ENCODE measurements at regions of chr14 and their contacts with region 1.

Region 1: GRCh38 chr14:91177073-91178034 is 63.5 kb downstream of the DGLUCY start:
- DNase-seq: peak; percentile 79
- ATAC-seq: peak; percentile 81
- H3K4me3 Mint-ChIP-seq: no peak overlapping the region
- H3K27ac Mint-ChIP-seq: peak overlapping the region; percentile 92
- H3K4me1 Mint-ChIP-seq: peaks cover 11% of the 10 kb centered on the region
- H3K27me3 Mint-ChIP-seq: no peaks in the 10 kb centered on the region

Region 2: DNA sequence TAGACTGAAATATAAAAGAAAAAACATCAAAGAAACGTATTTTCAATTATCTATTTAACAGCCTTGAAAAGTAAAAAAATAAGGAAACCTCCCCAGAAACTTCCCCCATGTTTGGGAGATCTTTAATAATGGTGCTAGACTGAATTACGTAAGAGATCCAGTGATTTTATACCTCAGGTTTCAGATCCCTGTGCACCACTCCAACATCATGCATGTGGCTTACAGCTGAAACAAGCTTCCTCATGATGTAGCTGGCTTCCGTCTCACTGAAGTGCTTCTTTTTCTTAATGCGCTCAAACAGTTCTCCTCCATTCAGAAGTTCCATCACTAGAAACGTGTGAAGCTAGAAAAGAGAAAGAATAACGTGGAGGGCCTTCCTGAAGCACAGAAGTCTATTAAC is 283.1 kb before region 1 on chr14:
- CTCF ChIA-PET with region 1: interaction called, 15 read pairs
- POLR2A ChIA-PET with region 1: no interaction called
- intact Hi-C with region 1: no loop called
- DNase-seq: no peak
- ATAC-seq: no peak
- H3K4me3 Mint-ChIP-seq: no peak overlapping the region
- H3K27ac Mint-ChIP-seq: no peak overlapping the region
- H3K4me1 Mint-ChIP-seq: no peaks in the 10 kb centered on the region
- H3K27me3 Mint-ChIP-seq: no peaks in the 10 kb centered on the region

Region 3: GRCh38 chr14:91048265-91048664 is 129.1 kb before region 1 on chr14:
- CTCF ChIA-PET with region 1: no interaction called
- POLR2A ChIA-PET with region 1: no interaction called
- intact Hi-C with region 1: no loop called
- DNase-seq: no peak
- ATAC-seq: no peak
- H3K4me3 Mint-ChIP-seq: no peak overlapping the region
- H3K27ac Mint-ChIP-seq: no peak overlapping the region
- H3K4me1 Mint-ChIP-seq: peaks cover 35% of the 10 kb centered on the region
- H3K27me3 Mint-ChIP-seq: no peaks in the 10 kb centered on the region

Region 4: DNA sequence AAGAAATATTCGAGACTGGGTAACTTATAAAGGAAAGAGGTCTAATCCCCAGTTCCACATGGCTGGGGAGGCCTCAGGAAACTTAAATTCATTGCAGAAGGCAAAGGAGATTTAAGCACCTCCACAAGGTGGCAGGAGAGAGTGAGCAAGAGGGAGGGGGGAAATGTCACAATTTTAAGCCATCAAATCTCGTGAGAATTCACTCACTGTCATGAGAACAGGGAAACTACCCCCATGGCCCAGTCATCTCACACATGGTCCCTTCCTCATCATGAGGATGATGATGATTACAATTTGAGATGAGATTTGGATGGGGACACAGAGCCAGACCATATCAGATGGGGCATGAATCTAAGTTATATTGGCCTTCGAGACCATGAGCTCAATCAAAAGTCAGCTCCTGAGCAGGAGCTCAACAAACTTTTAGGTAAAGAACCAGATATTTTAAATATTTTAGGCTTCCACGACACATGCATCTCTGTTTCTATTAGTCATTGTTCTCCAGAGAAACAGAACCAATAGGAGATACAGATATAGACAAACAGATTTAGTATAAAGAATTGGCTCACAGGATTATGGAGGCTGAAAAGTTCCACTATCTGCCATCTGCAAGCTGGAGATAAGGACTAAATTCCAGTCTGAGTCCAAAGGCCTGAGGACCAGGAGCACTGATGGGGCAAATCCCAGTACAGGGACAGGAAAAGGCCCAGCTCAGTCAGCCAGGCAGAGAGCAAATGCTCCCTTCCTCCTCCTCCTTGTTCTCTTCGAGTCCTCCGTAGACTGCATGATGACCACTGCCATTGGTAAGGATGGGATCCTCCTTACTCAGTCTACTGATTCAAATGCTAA is 38.6 kb before region 1 on chr14:
- CTCF ChIA-PET with region 1: interaction called, 17 read pairs
- POLR2A ChIA-PET with region 1: no interaction called
- intact Hi-C with region 1: no loop called
- DNase-seq: peak; percentile 72
- ATAC-seq: peak; percentile 84
- H3K4me3 Mint-ChIP-seq: no peak overlapping the region
- H3K27ac Mint-ChIP-seq: peak overlapping the region; percentile 29
- H3K4me1 Mint-ChIP-seq: peaks cover 41% of the 10 kb centered on the region
- H3K27me3 Mint-ChIP-seq: no peaks in the 10 kb centered on the region

Region 5: GRCh38 chr14:91193069-91193468 is 15.7 kb after region 1 on chr14:
- CTCF ChIA-PET with region 1: interaction called, 10 read pairs
- POLR2A ChIA-PET with region 1: interaction called, 8 read pairs
- intact Hi-C with region 1: no loop called
- DNase-seq: no peak
- ATAC-seq: no peak
- H3K4me3 Mint-ChIP-seq: no peak overlapping the region
- H3K27ac Mint-ChIP-seq: peak overlapping the region; percentile 49
- H3K4me1 Mint-ChIP-seq: peaks cover 22% of the 10 kb centered on the region
- H3K27me3 Mint-ChIP-seq: no peaks in the 10 kb centered on the region

Region 6: GRCh38 chr14:91228112-91229004 is 51.0 kb after region 1 on chr14:
- CTCF ChIA-PET with region 1: interaction called, 4 read pairs
- POLR2A ChIA-PET with region 1: no interaction called
- intact Hi-C with region 1: loop called (anchors 1 to 2 kb)
- DNase-seq: peak; percentile 95
- ATAC-seq: peak; percentile 87
- H3K4me3 Mint-ChIP-seq: peak overlapping the region; percentile 67
- H3K27ac Mint-ChIP-seq: peak overlapping the region; percentile 100
- H3K4me1 Mint-ChIP-seq: peaks cover 95% of the 10 kb centered on the region
- H3K27me3 Mint-ChIP-seq: no peaks in the 10 kb centered on the region

Region 7: DNA sequence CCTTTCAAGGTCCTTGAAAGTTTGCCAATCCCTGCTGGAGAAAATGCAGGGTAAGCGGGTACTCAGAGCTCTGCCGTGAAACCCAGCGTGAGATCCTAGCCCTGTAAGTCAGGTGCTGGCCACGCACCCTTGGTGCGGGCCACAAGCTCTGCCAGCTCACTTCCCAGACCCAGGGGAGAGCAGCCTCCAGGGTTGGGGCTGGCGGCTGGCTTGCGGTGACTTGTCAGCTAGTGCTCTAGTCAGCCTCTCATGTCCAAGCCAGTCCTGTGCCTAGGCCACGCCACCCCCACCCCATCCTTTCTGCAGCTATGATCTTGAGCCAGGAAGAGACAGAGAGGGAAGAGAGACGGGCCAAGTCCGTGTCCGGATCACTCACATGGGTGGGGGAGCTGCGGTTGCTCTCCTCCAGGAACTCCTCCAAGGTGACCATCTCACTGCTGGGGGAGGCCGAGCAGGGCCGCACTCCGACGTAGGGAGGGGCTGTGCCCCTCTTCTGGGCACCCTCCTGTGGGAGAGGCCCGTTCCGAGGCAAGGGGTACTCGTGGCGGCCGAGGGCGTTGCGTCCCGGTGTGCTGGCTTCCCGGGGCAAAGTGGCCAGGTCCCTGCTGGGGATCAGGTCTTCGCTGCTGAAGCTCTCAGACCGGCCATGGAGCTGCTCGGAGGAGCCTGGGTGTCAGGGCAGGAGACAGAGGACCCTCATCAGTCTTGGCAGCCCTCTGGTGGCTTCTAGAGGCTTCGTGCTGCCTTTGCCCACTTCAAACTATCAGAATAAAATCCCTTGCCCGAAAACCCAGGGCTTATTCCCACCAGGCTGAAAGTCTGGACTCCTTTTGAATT is 100.4 kb after region 1 on chr14:
- CTCF ChIA-PET with region 1: interaction called, 253 read pairs
- POLR2A ChIA-PET with region 1: no interaction called
- intact Hi-C with region 1: no loop called
- DNase-seq: no peak
- ATAC-seq: no peak
- H3K4me3 Mint-ChIP-seq: no peak overlapping the region
- H3K27ac Mint-ChIP-seq: no peak overlapping the region
- H3K4me1 Mint-ChIP-seq: no peaks in the 10 kb centered on the region
- H3K27me3 Mint-ChIP-seq: no peaks in the 10 kb centered on the region

Region 8: GRCh38 chr14:92074555-92074954 is 897.2 kb after region 1 on chr14:
- CTCF ChIA-PET with region 1: no interaction called
- POLR2A ChIA-PET with region 1: no interaction called
- intact Hi-C with region 1: no loop called
- DNase-seq: no peak
- ATAC-seq: no peak
- H3K4me3 Mint-ChIP-seq: no peak overlapping the region
- H3K27ac Mint-ChIP-seq: peak overlapping the region; percentile 24
- H3K4me1 Mint-ChIP-seq: no peaks in the 10 kb centered on the region
- H3K27me3 Mint-ChIP-seq: no peaks in the 10 kb centered on the region